ENCODE measurements at regions of chr1 and their contacts with region 1.

Region 1: DNA sequence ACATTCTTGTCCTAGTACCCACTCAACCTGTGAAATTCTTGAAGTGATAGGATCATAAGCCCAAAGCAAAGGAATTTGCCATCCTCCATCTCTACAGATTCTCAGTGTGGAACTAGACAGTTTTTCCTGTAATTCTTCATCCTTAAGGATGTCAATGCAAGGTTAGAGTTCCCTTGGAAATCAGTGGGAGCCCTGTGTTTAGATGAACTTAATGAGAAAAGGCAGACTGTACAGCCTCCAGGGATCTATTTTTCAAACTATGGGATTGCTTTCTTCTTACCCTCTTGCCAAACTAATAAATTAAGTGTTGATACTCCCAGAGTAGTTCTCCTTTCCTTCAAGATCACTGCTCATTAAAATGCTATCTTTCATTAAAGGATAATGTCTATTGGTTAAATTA is 78.1 kb upstream of the OLFM3 start:
- DNase-seq: no peak
- ATAC-seq: no peak
- H3K4me3 ChIP-seq: no peak overlapping the region
- H3K4me3 Mint-ChIP-seq: no peak overlapping the region
- H3K27ac ChIP-seq: no peak overlapping the region
- H3K27ac Mint-ChIP-seq: no peak overlapping the region
- H3K4me1 ChIP-seq: no peaks in the 10 kb centered on the region
- H3K4me1 Mint-ChIP-seq: no peaks in the 10 kb centered on the region
- H3K27me3 ChIP-seq: no peaks in the 10 kb centered on the region
- H3K27me3 Mint-ChIP-seq: no peaks in the 10 kb centered on the region

Region 2: GRCh38 chr1:101769520-101769919 is 305.4 kb before region 1 on chr1:
- CTCF ChIA-PET with region 1: no interaction called
- POLR2A ChIA-PET with region 1: no interaction called
- intact Hi-C with region 1: no loop called
- DNase-seq: no peak
- ATAC-seq: no peak
- H3K4me3 ChIP-seq: no peak overlapping the region
- H3K4me3 Mint-ChIP-seq: no peak overlapping the region
- H3K27ac ChIP-seq: no peak overlapping the region
- H3K27ac Mint-ChIP-seq: no peak overlapping the region
- H3K4me1 ChIP-seq: no peaks in the 10 kb centered on the region
- H3K4me1 Mint-ChIP-seq: no peaks in the 10 kb centered on the region
- H3K27me3 ChIP-seq: no peaks in the 10 kb centered on the region
- H3K27me3 Mint-ChIP-seq: peaks cover 0 to 8% (median 7%) of the 10 kb centered on the region in 5 donors

Region 3: DNA sequence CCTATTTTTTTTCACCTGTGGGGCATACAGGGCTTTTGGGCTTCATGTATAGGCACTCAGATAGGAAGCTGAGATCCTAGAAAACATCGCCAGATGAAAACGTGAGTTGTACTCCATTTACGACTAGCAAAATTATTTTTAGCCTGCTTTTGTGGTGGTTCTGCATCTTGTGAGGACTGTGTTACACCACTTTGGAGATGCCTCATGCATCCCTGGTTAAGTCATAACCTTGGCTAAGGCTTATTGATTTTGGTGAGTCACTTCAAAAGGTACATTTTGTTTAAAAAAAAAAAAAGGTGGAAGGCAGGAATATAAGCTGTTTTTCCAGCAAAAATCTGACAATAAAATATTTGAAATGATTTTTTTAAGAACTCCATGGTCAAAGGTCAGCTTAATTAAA is 23.7 kb after region 1 on chr1:
- CTCF ChIA-PET with region 1: interaction called, 12 read pairs
- POLR2A ChIA-PET with region 1: no interaction called
- intact Hi-C with region 1: no loop called
- DNase-seq: no peak
- ATAC-seq: no peak
- H3K4me3 ChIP-seq: no peak overlapping the region
- H3K4me3 Mint-ChIP-seq: no peak overlapping the region
- H3K27ac ChIP-seq: no peak overlapping the region
- H3K27ac Mint-ChIP-seq: no peak overlapping the region
- H3K4me1 ChIP-seq: no peaks in the 10 kb centered on the region
- H3K4me1 Mint-ChIP-seq: no peaks in the 10 kb centered on the region
- H3K27me3 ChIP-seq: no peaks in the 10 kb centered on the region
- H3K27me3 Mint-ChIP-seq: no peaks in the 10 kb centered on the region

Region 4: DNA sequence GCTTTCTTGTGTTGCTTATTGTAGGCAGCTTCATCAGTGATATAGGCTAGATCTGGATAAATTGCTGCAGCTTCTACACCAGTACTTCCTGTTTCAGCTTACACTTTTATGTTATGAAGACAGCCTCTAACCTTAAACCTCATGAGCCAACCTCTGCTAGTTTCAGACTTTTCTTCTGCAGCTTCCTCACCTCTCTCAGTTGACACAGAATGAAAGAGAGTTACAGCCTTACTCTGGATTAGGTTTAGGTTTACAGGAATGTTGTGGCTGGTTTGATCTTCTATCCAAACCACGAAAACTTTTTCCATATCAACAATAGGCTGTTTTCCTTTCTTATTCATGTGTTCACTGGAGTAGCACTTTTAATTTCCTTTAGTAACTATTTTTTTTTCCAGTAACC is 1373.7 kb after region 1 on chr1:
- CTCF ChIA-PET with region 1: no interaction called
- POLR2A ChIA-PET with region 1: no interaction called
- intact Hi-C with region 1: no loop called
- DNase-seq: no peak
- ATAC-seq: no peak
- H3K4me3 ChIP-seq: no peak overlapping the region
- H3K4me3 Mint-ChIP-seq: no peak overlapping the region
- H3K27ac ChIP-seq: no peak overlapping the region
- H3K27ac Mint-ChIP-seq: peak overlapping the region in 1 of 9 donors; percentile 22
- H3K4me1 ChIP-seq: no peaks in the 10 kb centered on the region
- H3K4me1 Mint-ChIP-seq: peaks cover 0 to 14% (median 0%) of the 10 kb centered on the region in 7 donors
- H3K27me3 ChIP-seq: no peaks in the 10 kb centered on the region
- H3K27me3 Mint-ChIP-seq: peaks cover 0 to 3% (median 0%) of the 10 kb centered on the region in 5 donors